RWPE1 (cell line): ENCODE measurements at regions of chr11 and their contacts with region 1.

Region 1: GRCh38 chr11:64152841-64153691 is 12.8 kb downstream of the MACROD1 start:
- DNase-seq: peak; percentile 85
- H3K27ac ChIP-seq: peak overlapping the region; percentile 18
- CTCF ChIP-seq: peak; percentile 99

Region 2: GRCh38 chr11:63855975-63856749 is 296.9 kb before region 1 on chr11:
- CTCF ChIA-PET with region 1: interaction called, 10 read pairs
- POLR2A ChIA-PET with region 1: no interaction called
- DNase-seq: no peak
- H3K27ac ChIP-seq: no peak overlapping the region
- CTCF ChIP-seq: no peak

Region 3: GRCh38 chr11:64000026-64000739 is 152.9 kb before region 1 on chr11:
- CTCF ChIA-PET with region 1: interaction called, 45 read pairs
- POLR2A ChIA-PET with region 1: no interaction called
- DNase-seq: peak; percentile 64
- H3K27ac ChIP-seq: peak overlapping the region; percentile 85
- CTCF ChIP-seq: peak; percentile 86